ENCODE measurements at regions of chr20 and their contacts with region 1.

Region 1: DNA sequence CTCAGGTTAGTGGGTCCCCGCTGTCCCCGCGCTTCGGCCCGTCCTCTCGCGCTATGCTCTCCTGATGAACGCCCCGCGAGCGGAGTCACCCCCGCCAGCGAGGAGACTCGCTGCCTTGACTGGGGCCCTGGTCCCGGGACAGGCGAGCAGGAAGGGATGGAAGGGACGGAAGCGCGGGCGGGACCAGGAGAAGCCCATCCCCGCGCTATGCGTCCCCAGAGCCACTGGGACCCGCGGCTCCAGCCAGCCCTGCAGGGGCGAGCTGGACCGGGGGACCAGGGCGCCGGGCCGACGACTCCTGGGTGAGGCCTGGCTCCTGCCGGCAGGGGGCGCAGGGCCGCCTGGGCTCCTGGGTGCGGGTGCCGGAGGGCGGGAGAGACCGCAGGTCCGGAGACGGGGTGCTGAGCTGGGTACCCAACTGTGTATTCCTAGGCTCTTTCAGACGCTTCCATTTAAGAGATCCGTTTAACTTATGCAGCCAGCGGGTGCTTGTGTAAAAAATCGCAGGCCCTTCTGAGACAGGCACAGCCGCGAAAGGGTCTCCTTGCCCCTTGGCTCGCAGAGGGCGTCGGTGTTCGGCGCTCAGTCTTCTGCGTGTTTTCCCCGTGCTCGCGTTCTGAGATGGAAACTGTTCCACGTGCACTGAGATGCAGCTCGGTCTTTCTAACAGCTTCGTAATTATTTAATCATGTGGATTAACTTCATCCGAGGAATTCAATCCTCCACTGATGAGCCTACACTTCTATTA is 586 bp upstream of the SYCP2 start:
- DNase-seq: peak; percentile 82
- ATAC-seq: peak; percentile 84
- H3K4me3 Mint-ChIP-seq: peak overlapping the region; percentile 73
- H3K27ac Mint-ChIP-seq: peak overlapping the region; percentile 73
- H3K4me1 Mint-ChIP-seq: peaks cover 49% of the 10 kb centered on the region
- H3K27me3 Mint-ChIP-seq: no peaks in the 10 kb centered on the region

Region 2: GRCh38 chr20:59794555-59794954 is 139.5 kb before region 1 on chr20:
- CTCF ChIA-PET with region 1: no interaction called
- DNase-seq: no peak
- ATAC-seq: no peak
- H3K4me3 Mint-ChIP-seq: no peak overlapping the region
- H3K27ac Mint-ChIP-seq: no peak overlapping the region
- H3K4me1 Mint-ChIP-seq: no peaks in the 10 kb centered on the region
- H3K27me3 Mint-ChIP-seq: peaks cover 11% of the 10 kb centered on the region

Region 3: GRCh38 chr20:59850018-59850641 is 83.9 kb before region 1 on chr20:
- CTCF ChIA-PET with region 1: no interaction called
- DNase-seq: no peak
- ATAC-seq: no peak
- H3K4me3 Mint-ChIP-seq: no peak overlapping the region
- H3K27ac Mint-ChIP-seq: no peak overlapping the region
- H3K4me1 Mint-ChIP-seq: no peaks in the 10 kb centered on the region
- H3K27me3 Mint-ChIP-seq: no peaks in the 10 kb centered on the region

Region 4: DNA sequence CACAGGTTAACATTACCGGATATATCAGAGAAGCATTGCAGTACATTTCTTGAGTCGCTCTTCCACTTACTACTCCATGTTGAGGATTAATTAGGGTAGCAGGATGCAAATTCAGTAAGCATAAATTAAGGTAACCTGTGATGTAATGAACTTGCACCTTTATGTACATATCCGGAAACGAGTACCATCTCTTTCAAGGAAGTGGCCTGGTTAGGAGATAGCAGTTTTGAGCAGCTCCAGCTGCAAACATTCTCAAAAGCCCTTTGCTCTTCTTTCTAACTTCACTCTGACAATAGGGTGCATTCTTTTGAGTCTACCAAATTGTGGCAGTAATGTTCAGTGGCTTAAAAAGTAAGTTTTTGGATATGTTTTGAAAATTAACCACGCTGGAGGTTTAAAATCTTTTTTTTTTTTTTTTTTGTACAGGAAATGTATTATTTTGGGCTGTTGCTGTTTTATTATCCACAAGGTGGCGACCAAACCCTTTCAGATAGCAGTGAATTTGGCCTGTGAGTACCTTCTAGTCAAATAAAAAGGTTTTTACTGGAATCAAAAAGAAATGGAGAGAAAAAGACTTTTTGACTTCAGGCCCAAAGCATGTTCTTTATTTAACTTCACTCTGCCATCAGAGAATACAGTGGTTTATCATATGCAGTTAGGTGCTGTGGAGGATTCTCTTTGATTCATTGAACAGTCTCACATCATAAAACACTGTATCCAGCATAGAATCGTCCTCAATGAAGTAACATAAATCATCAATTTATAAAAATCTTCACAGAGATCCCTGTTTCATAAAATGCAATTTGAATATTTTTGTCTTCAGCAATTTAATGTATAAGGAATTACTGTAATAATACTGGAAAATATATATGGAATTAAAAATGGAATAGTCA is 15.1 kb after region 1 on chr20:
- CTCF ChIA-PET with region 1: interaction called, 14 read pairs
- DNase-seq: peak; percentile 59
- ATAC-seq: peak; percentile 85
- H3K4me3 Mint-ChIP-seq: peak overlapping the region; percentile 54
- H3K27ac Mint-ChIP-seq: peak overlapping the region; percentile 92
- H3K4me1 Mint-ChIP-seq: peaks cover 21% of the 10 kb centered on the region
- H3K27me3 Mint-ChIP-seq: no peaks in the 10 kb centered on the region